Transverse colon (tissue), 4 donors: ENCODE measurements at regions of chr9 and their contacts with region 1.

Region 1: GRCh38 chr9:37650873-37651768 is at the start of gene FRMPD1:
- DNase-seq: peak; percentile 81
- H3K4me3 ChIP-seq: peak within 1 kb of the TSS; percentile 29 to 65 (median 49)
- H3K27ac ChIP-seq: no peak within 1 kb of the TSS
- H3K4me1 ChIP-seq: peaks cover 0 to 11% (median 9%) of the 10 kb centered on the region in 4 donors
- H3K27me3 ChIP-seq: peaks cover 63% of the 10 kb centered on the region
- CTCF ChIP-seq: no peak
- EP300 ChIP-seq: no peak
- POLR2A ChIP-seq: no peak
- total RNA-seq, gene FRMPD1: 0.27 to 4.6 (median 0.64) TPM in 3 of 4 donors, not detected in the other

Region 2: DNA sequence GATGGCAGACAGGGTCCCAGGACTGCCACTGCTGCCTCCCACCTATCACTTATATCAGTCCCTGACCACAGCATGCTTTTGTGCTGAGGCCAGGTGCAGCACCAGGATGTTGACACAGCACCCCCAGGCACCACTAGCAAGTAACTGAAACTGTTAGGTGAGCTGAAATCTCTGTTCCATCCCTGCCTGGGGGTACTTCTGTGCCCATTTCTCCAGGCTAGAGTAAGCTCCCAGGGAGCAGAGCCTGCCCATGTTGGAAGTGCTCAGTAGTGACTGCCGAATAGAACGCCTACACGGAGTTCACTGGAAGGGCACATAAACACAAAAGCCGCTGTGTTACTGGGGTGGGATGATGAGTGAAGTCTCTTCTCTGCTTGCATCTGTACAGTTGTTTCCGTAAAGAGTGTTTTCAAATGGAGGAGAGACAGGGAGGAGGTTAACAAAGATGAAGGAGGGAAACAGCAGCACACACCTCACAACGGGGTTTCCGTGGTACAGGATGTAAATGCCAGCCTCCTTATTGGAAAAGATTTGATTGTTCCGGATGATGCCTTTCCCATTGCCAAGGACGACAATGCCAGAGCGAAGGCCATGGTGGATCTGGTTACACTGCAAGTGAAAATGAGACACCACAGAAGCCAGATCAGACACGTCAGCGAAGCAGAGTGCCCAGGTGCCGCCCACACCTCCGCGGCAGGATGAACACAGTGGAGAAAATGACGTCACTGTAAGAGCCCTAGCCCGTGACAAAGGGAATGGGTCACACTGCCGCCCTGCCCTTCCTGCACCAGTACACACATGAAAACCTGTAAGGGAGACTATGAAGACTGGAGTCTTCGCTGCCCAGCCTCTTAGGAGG is 122.2 kb before region 1 on chr9:
- in situ Hi-C with region 1: loop called in 1 of 4 experiments (anchors 25 kb)
- intact Hi-C with region 1: no loop called
- DNase-seq: peak; percentile 71
- H3K4me3 ChIP-seq: no peak overlapping the region
- H3K27ac ChIP-seq: peak overlapping the region; percentile 7 to 63 (median 27)
- H3K4me1 ChIP-seq: no peaks in the 10 kb centered on the region
- H3K27me3 ChIP-seq: no peaks in the 10 kb centered on the region
- CTCF ChIP-seq: no peak
- EP300 ChIP-seq: no peak
- POLR2A ChIP-seq: peak; percentile 46

Region 3: GRCh38 chr9:37663926-37664325 is 12.8 kb after region 1 on chr9:
- in situ Hi-C with region 1: no loop called
- intact Hi-C with region 1: no loop called
- DNase-seq: no peak
- H3K4me3 ChIP-seq: no peak overlapping the region
- H3K27ac ChIP-seq: no peak overlapping the region
- H3K4me1 ChIP-seq: no peaks in the 10 kb centered on the region
- H3K27me3 ChIP-seq: peaks cover 8% of the 10 kb centered on the region
- CTCF ChIP-seq: no peak
- EP300 ChIP-seq: no peak
- POLR2A ChIP-seq: no peak

Region 4: GRCh38 chr9:37753489-37754190 is 102.5 kb after region 1 on chr9 and contains the start of gene TRMT10B:
- in situ Hi-C with region 1: loop called in 1 of 4 experiments (anchors 25 kb)
- intact Hi-C with region 1: no loop called
- DNase-seq: peak; percentile 68
- H3K4me3 ChIP-seq: peak within 1 kb of the TSS; percentile 63 to 90 (median 78)
- H3K27ac ChIP-seq: peak within 1 kb of the TSS; percentile 74 to 88 (median 84)
- H3K4me1 ChIP-seq: peaks cover 4 to 12% (median 9%) of the 10 kb centered on the region in 4 donors
- H3K27me3 ChIP-seq: no peaks in the 10 kb centered on the region
- CTCF ChIP-seq: peak in 1 of 5 experiments; percentile 32
- EP300 ChIP-seq: no peak
- POLR2A ChIP-seq: peak; percentile 39
- total RNA-seq, gene TRMT10B: 1.4 to 7.5 (median 4.0) TPM